Lower lobe of right lung (tissue), 2 donors: ENCODE measurements at regions of chr15 and their contacts with region 1.

Region 1: GRCh38 chr15:63402498-63403253 is 21.0 kb upstream of the CA12 start:
- DNase-seq: no peak
- ATAC-seq: peak; percentile 66 to 68
- H3K4me3 ChIP-seq: no peak overlapping the region
- H3K27ac ChIP-seq: no peak overlapping the region
- H3K4me1 ChIP-seq: peaks cover 10% of the 10 kb centered on the region
- H3K27me3 ChIP-seq: no peaks in the 10 kb centered on the region
- CTCF ChIP-seq: peak; percentile 64

Region 2: DNA sequence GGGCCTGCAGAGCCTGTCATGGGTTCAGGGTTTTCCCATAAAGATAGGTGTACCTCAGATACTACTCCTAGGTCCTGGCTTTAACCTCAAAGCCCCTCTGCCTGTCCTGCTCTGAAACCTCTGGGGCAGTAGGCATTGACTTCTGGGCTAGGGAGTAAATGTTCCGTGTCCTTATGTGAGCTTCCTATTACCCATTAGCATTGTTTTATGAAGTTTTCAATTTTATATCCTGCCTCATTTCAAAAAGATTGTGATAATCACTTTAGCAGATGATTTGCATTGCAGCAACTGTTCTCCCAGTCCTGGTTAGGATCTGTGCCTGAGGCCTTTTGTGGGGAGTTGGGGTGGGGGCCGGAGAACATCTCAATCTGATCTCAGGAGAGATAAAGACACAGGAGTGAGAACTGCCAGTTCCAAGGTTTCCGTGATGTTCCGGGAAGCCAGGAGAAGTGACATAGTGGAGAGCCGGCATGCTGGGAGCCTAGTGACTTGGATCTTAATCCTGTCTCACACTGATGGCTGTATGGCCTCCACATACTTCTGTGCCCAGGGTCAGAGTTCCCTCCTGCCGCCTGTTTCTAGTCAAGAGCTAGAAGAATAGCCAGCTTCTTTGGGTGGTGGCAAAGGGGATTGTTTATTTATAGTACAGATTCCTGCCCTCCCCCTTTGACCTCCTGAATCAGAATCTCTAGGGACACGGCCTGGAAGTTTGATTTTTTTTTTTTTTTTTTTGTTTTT is 349.5 kb before region 1 on chr15:
- intact Hi-C with region 1: no loop called
- DNase-seq: no peak
- ATAC-seq: peak in 1 of 2 donors; percentile 54
- H3K4me3 ChIP-seq: no peak overlapping the region
- H3K27ac ChIP-seq: peak overlapping the region; percentile 92
- H3K4me1 ChIP-seq: peaks cover 84% of the 10 kb centered on the region
- H3K27me3 ChIP-seq: no peaks in the 10 kb centered on the region
- CTCF ChIP-seq: no peak

Region 3: GRCh38 chr15:63288778-63289378 is 113.8 kb before region 1 on chr15:
- intact Hi-C with region 1: loop called (anchors 5 kb)
- DNase-seq: no peak
- ATAC-seq: peak in 1 of 2 donors; percentile 61
- H3K4me3 ChIP-seq: no peak overlapping the region
- H3K27ac ChIP-seq: no peak overlapping the region
- H3K4me1 ChIP-seq: peaks cover 4% of the 10 kb centered on the region
- H3K27me3 ChIP-seq: no peaks in the 10 kb centered on the region
- CTCF ChIP-seq: peak; percentile 66

Region 4: GRCh38 chr15:63573533-63573932 is 170.9 kb after region 1 on chr15:
- intact Hi-C with region 1: no loop called
- DNase-seq: no peak
- ATAC-seq: peak in 1 of 2 donors; percentile 28
- H3K4me3 ChIP-seq: no peak overlapping the region
- H3K27ac ChIP-seq: no peak overlapping the region
- H3K4me1 ChIP-seq: no peaks in the 10 kb centered on the region
- H3K27me3 ChIP-seq: no peaks in the 10 kb centered on the region
- CTCF ChIP-seq: no peak

Region 5: DNA sequence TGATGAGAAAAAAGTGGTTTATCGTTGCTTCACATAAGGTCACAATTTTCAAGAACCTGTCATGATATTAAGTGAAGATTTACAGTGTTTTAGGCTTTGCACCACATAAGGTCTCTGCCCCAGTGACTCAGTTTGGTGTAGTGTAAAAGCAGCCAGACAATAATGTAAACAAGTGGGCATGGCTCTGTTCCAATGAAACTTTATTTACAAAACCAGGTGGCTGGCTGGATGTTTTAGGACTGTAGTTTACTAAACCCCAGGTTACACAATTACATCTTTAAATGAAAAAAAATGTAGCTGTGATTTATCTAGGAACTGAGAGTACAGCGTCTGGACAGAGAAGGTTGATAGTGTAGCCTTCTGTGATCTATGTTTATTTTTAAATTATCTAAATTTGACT is 184.9 kb after region 1 on chr15:
- intact Hi-C with region 1: no loop called
- DNase-seq: no peak
- ATAC-seq: peak in 1 of 2 donors; percentile 28
- H3K4me3 ChIP-seq: no peak overlapping the region
- H3K27ac ChIP-seq: no peak overlapping the region
- H3K4me1 ChIP-seq: no peaks in the 10 kb centered on the region
- H3K27me3 ChIP-seq: no peaks in the 10 kb centered on the region
- CTCF ChIP-seq: no peak